ENCODE measurements at regions of chr5 and their contacts with region 1.

Region 1: DNA sequence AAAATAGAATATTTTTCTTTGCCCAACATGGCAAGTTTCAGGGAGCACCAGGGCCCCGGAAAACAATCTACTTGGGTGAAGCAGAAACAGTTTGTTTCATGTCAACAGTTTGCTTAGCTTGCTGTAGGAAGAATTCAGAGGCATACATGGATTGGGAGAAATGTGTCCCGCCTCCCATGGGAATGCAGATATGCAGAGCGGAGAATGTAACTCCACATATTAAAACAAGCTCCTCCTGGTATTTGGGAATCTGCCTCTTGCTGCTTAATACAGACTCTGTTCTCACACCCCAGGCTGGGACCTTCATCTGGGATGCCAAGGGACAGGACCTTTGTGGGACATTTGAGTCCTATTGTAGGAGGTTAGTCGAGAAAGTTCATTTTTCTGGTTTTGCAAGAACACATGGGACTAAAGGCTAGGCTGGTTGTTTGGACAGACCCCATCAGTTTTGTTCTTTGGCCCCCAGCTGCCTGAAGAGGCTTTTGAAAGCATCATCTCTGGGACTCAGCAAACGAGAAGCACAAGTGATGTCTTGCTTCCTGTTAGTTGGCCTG is 220.5 kb upstream of the ADRA1B start:
- DNase-seq: no peak
- ATAC-seq: no peak
- H3K4me3 ChIP-seq: no peak overlapping the region
- H3K27ac ChIP-seq: no peak overlapping the region
- H3K4me1 ChIP-seq: no peaks in the 10 kb centered on the region
- H3K27me3 ChIP-seq: no peaks in the 10 kb centered on the region
- CTCF ChIP-seq: no peak

Region 2: DNA sequence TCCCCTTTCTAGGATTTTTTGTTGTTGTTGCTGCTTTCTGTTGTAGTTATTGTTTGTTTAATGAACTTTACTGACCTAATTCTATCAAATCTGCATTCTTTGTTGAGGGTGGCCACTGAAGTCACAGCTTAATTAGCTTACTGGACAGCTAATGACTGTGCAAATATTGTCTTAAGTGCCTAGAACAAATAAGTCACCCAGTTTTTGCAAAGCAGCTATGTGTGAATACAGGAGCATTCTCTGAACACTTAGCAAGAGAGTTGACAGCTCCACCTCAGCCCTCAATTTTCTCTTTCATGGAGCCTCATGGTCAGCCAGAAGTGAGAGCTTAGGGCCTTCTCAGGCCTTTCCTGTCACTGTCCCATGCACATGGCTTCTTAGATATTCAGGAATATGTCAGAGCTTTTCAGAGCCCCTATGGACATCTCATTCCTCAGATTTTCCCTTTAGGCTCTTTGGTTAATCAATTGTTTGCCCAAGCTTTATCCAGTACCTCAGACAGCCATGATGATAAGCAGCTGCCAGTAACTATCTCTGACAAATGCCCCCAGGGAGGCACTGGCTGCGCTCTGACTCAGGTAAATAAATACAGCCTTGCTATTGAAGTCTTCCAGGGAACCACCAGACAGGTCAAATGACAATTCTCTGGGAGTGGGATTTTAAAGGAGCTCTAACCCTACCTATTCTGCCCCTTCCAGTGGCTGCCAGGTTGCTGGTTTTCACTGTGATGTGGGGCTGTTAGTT is 124.2 kb before region 1 on chr5:
- intact Hi-C with region 1: no loop called
- DNase-seq: no peak
- ATAC-seq: no peak
- H3K4me3 ChIP-seq: no peak overlapping the region
- H3K27ac ChIP-seq: no peak overlapping the region
- H3K4me1 ChIP-seq: no peaks in the 10 kb centered on the region
- H3K27me3 ChIP-seq: no peaks in the 10 kb centered on the region
- CTCF ChIP-seq: no peak

Region 3: DNA sequence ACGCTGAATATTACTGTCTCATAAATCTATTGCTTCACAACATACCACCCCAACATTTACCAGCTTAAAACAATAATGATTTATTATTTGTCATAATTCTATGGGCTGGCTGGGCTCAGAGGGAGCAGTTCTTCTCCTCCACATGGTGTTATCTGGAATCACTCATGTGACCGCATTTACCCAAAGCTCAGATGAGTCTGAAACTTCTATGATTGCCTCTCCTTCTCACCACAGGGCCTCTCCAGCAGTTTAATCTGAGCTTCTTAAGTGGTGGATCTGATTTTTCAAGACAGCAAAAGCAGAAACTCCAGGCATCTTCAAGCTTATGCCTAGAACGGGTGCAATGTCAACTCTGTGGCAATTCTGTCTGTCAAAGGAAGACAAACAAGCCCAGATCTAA is 10.1 kb after region 1 on chr5:
- intact Hi-C with region 1: loop called in 1 of 2 experiments (anchors 1 kb)
- DNase-seq: no peak
- ATAC-seq: no peak
- H3K4me3 ChIP-seq: no peak overlapping the region
- H3K27ac ChIP-seq: no peak overlapping the region
- H3K4me1 ChIP-seq: no peaks in the 10 kb centered on the region
- H3K27me3 ChIP-seq: no peaks in the 10 kb centered on the region
- CTCF ChIP-seq: no peak

Measured in psoas muscle (tissue), 8 donors.